ENCODE measurements at regions of chrX and their contacts with region 1.

Region 1: GRCh38 chrX:155026726-155027508 is at the start of gene FUNDC2:
- DNase-seq: peak; percentile 96
- ATAC-seq: peak; percentile 96
- total RNA-seq, gene FUNDC2: 403 TPM

Region 2: DNA sequence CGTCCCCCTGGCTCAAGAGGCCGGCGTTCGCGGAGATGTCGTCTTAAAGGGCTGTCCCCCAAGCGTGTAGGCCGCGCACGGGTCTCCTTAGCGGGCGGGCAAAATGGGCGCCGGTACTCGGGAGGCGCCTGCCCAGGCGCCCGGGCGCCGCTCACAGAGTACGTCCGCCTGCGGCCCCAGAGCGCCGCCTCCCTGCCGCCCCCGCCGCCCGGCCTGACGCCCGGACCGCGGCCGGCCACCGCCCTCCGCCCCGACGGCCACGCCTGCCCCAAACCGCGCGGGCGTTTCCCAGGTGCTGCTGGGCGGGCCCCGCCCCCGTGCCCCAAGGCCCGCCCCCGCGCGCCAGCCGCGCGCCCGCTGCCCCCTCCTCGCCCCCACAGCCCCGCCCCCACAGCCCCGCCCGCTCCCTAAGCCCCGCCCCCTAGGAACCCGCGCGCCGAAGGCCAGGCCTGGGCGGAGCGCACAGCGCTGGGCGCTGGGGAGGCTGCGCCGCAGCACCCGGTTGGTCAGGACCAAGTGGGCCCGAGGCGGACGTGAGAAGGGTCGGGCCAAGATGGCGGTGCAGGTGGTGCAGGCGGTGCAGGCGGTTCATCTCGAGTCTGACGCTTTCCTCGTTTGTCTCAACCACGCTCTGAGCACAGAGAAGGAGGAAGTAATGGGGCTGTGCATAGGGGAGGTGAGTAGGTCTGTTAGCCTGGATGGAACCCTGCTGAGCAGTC is 44.2 kb after region 1 on chrX and contains the starts of genes BRCC3, CMC4 and MTCP1:
- intact Hi-C with region 1: loop called (anchors 2 kb)
- DNase-seq: peak; percentile 89
- ATAC-seq: peak; percentile 96
- total RNA-seq, gene BRCC3: 16.5 TPM
- total RNA-seq, gene CMC4: 27.7 TPM
- total RNA-seq, gene MTCP1: 54.5 TPM

Region 3: GRCh38 chrX:155263854-155264628 is 237.1 kb after region 1 on chrX and contains the start of gene RAB39B:
- intact Hi-C with region 1: no loop called
- DNase-seq: peak; percentile 84
- ATAC-seq: peak; percentile 72
- total RNA-seq, gene RAB39B: 0.22 TPM